ENCODE measurements at regions of chr17 and their contacts with region 1.

Region 1: GRCh38 chr17:65100316-65101140 is 36.6 kb upstream of the RGS9 start:
- DNase-seq: peak; percentile 74
- H3K4me3 Mint-ChIP-seq: peak overlapping the region; percentile 86
- H3K27ac Mint-ChIP-seq: peak overlapping the region; percentile 95
- H3K4me1 Mint-ChIP-seq: peaks cover 16% of the 10 kb centered on the region
- H3K27me3 Mint-ChIP-seq: no peaks in the 10 kb centered on the region

Region 2: DNA sequence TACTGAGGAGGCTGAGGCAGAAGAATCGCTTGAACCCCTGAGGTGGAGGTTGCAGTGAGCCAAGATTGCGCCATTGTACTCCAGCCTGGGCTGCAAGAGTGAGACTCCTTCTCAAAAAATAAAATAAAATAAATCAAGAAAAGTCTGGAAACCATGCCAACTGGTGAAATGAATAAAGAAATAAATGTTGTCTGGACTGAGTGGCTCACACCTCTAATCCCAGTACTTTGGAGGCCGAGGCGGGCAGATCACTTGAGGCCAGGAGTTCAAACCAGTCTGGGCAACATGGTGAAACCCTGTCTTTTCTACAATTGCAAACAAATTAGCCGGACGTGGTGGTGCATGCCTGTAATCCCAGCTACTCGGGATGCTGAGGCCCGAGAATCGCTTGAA is 180.5 kb before region 1 on chr17:
- CTCF ChIA-PET with region 1: interaction called, 4 read pairs
- intact Hi-C with region 1: loop called (anchors 2 kb)
- DNase-seq: no peak
- H3K4me3 Mint-ChIP-seq: peak overlapping the region; percentile 83
- H3K27ac Mint-ChIP-seq: peak overlapping the region; percentile 70
- H3K4me1 Mint-ChIP-seq: peaks cover 10% of the 10 kb centered on the region
- H3K27me3 Mint-ChIP-seq: no peaks in the 10 kb centered on the region

Region 3: GRCh38 chr17:64975329-64976087 is 125.0 kb before region 1 on chr17:
- CTCF ChIA-PET with region 1: interaction called, 3 read pairs
- intact Hi-C with region 1: loop called (anchors 2 kb)
- DNase-seq: peak; percentile 94
- H3K4me3 Mint-ChIP-seq: peak overlapping the region; percentile 90
- H3K27ac Mint-ChIP-seq: peak overlapping the region; percentile 91
- H3K4me1 Mint-ChIP-seq: peaks cover 45% of the 10 kb centered on the region
- H3K27me3 Mint-ChIP-seq: no peaks in the 10 kb centered on the region

Region 4: DNA sequence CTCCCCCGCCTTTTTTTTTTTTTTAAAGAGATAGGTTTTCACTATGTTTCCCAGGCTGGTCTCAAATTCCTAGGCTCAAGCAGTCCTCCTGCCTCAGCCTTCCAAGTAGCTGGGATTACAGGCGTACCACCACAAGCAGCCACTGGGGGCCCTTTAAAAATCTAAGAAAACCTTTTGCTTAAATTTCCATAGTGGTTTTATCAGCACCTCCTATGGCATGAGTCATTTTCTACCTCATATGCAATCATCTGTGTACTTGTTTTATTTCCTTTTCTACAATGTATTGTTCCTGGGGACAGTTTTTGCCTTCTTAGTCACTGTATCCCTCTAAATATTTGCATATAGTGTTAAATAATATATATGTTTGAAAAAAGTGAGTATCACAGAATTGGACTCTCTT is 73.2 kb before region 1 on chr17:
- CTCF ChIA-PET with region 1: no interaction called
- intact Hi-C with region 1: loop called (anchors 1 kb)
- DNase-seq: peak; percentile 77
- H3K4me3 Mint-ChIP-seq: peak overlapping the region; percentile 58
- H3K27ac Mint-ChIP-seq: peak overlapping the region; percentile 94
- H3K4me1 Mint-ChIP-seq: peaks cover 80% of the 10 kb centered on the region
- H3K27me3 Mint-ChIP-seq: no peaks in the 10 kb centered on the region

Region 5: DNA sequence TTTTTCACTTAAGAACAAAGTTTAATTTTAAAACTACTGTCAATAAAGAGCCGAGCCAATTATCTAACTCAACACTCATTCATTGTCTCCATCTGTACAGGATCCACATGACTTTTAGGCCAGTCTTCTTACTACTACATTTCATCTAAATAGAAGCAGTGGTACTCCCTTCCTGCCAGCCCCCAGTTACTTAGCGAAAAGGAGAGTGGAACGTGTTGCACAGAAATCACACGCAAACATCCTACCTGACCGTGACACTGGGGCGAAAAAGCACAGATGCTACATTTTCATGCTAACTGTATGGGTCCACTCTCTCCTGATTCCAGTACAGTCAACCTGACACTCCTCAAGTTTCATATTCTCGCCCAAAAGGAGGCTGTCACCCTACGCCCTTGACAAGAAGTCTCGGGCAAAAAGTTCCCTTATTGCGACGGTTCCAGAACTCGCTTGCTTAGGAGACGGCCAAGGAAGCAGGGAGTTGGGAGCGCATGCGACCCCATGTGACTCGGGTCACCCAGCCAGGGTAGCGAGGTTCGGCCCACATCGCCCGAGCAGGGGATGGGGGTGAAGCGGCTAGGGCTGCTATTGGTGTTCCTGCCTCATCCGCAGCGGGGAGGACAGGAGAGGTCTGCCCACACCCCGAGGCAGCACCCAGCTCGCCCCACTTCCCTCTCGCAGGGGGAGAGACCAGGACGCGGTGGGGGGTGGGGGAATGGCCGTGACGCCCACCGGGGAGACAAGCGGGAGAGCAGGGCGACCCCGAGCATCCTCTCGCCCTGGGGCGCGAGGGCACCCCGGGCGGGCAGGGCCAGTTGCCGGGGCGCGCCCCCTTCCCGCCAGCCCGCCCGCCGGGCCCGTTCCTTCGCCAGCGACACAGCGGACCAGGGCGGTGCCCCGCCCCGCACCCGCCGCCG is 44.9 kb before region 1 on chr17:
- CTCF ChIA-PET with region 1: no interaction called
- intact Hi-C with region 1: loop called (anchors 1 kb)
- DNase-seq: peak; percentile 55
- H3K4me3 Mint-ChIP-seq: peak overlapping the region; percentile 98
- H3K27ac Mint-ChIP-seq: peak overlapping the region; percentile 94
- H3K4me1 Mint-ChIP-seq: peaks cover 43% of the 10 kb centered on the region
- H3K27me3 Mint-ChIP-seq: no peaks in the 10 kb centered on the region

Region 6: DNA sequence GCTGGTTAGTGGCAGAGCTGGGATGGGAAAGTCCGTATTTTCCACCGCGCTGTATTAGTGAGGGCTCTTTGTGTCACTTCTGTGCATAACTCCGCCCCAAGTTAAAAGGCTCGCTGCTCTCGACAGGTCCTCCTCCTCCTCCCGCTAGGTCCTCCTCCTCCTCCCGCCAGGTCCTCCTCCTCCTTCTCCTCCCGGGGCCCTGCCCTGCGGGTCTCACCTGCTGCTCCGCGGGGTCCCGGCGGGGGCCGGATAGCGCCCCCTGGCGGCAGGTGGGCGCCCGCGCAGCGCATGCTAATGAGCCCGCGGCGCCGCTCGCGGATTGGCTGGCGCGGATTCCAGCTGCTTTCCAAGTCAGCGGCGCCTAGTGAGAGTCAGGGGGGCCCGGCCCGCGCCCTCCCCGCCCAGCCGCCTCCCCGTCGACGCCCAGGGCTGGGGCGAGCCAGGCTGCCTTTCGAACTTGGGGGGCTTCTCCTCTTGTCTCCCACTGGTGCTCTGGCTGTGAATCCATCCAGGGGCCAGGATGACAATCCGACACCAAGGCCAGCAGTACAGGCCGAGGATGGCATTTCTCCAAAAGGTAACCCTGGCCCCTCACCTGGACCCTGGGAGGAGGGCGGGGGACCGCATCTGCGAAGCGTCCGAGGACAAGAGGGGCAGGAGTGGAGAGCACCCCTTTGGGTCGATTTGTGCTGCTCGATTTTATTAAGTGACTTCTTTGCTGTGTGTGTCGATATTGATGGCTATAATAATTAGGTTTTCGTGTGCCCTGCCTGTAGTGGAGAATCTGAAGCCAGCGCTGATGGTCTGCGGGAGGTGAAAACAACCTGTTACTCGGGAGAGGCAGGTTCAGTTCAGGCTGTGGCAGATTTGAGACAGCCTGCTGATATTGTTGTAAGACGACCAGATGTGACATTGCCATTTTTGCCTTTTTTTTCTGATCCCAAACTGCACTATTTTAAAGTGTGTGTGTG is 36.8 kb after region 1 on chr17 and contains the start of gene RGS9:
- CTCF ChIA-PET with region 1: interaction called, 17 read pairs
- intact Hi-C with region 1: loop called (anchors 1 kb)
- DNase-seq: peak; percentile 75
- H3K4me3 Mint-ChIP-seq: peak within 1 kb of the TSS; percentile 59
- H3K27ac Mint-ChIP-seq: no peak within 1 kb of the TSS
- H3K4me1 Mint-ChIP-seq: peaks cover 15% of the 10 kb centered on the region
- H3K27me3 Mint-ChIP-seq: peaks cover 11% of the 10 kb centered on the region
- total RNA-seq, gene RGS9: 1.2 to 1.6 TPM